Calu3 (cell line): ENCODE measurements at regions of chr7 and their contacts with region 1.

Region 1: DNA sequence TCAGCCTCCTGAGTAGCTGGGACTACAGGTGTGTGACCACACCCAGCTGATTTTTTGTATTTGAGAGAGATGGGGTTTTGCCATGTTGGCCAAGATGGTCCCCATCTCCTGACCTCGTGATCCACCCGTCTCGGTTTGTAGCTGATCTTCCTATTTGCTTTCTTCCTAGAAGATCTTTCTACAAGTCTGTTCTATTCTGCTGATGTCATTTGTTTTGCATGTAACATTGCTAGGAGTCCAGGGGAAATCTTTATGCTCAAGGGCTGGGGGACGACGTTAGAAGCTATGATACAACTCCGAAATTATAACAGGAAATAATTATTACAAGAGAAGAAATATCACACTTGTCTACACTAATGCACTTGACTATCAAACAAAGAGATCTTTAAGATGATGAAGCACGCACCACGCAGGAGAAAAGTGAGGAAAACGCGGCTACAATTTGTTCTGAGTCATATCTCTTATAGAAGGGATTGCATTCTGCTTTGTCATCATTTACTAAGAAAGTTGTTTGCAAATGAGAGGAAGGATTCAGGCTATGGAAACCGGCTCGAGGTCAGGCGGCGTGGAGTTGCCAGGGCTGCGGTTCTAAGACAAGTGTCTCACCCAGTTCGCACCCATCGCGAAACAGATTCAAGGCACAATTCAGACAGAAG is 103.0 kb upstream of the CARD11 start:
- DNase-seq: peak; percentile 26
- H3K4me3 Mint-ChIP-seq: peak overlapping the region; percentile 17
- H3K27ac Mint-ChIP-seq: peak overlapping the region; percentile 19
- H3K4me1 Mint-ChIP-seq: peaks cover 12% of the 10 kb centered on the region
- H3K27me3 Mint-ChIP-seq: no peaks in the 10 kb centered on the region
- CTCF ChIP-seq: no peak

Region 2: DNA sequence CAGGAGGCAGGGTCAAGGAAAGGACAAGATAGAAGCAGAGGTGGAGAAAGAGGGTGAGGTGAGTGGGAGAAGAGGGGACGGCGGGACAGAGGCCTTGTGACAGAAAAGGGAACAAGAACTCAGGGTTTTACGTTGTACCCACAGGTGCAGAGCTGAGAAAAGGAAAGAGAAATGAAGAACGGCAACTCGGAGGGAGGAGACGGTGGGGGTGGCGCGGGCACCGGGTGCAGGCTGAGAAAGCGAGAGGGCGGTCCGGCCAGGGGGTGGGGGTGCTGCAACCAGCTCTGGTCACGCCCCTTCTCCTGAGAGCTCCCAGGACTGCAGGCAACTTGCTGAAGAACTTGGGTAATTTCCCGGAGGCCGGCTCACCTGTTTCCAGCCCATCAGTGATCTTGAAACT is 168.3 kb before region 1 on chr7:
- CTCF ChIA-PET with region 1: no interaction called
- intact Hi-C with region 1: no loop called
- DNase-seq: no peak
- H3K4me3 Mint-ChIP-seq: no peak overlapping the region
- H3K27ac Mint-ChIP-seq: no peak overlapping the region
- H3K4me1 Mint-ChIP-seq: no peaks in the 10 kb centered on the region
- H3K27me3 Mint-ChIP-seq: no peaks in the 10 kb centered on the region
- CTCF ChIP-seq: no peak

Region 3: GRCh38 chr7:3089493-3089892 is 57.2 kb before region 1 on chr7:
- CTCF ChIA-PET with region 1: interaction called, 3 read pairs
- intact Hi-C with region 1: loop called (anchors 10 kb)
- DNase-seq: peak; percentile 44
- H3K4me3 Mint-ChIP-seq: no peak overlapping the region
- H3K27ac Mint-ChIP-seq: no peak overlapping the region
- H3K4me1 Mint-ChIP-seq: no peaks in the 10 kb centered on the region
- H3K27me3 Mint-ChIP-seq: peaks cover 29% of the 10 kb centered on the region
- CTCF ChIP-seq: peak; percentile 83

Region 4: GRCh38 chr7:3133811-3134385 is 12.8 kb before region 1 on chr7:
- CTCF ChIA-PET with region 1: interaction called, 14 read pairs
- intact Hi-C with region 1: no loop called
- DNase-seq: no peak
- H3K4me3 Mint-ChIP-seq: no peak overlapping the region
- H3K27ac Mint-ChIP-seq: no peak overlapping the region
- H3K4me1 Mint-ChIP-seq: peaks cover 3% of the 10 kb centered on the region
- H3K27me3 Mint-ChIP-seq: peaks cover 24% of the 10 kb centered on the region
- CTCF ChIP-seq: no peak